HCT116 (cell line): ENCODE measurements at regions of chr10 and their contacts with region 1.

Region 1: DNA sequence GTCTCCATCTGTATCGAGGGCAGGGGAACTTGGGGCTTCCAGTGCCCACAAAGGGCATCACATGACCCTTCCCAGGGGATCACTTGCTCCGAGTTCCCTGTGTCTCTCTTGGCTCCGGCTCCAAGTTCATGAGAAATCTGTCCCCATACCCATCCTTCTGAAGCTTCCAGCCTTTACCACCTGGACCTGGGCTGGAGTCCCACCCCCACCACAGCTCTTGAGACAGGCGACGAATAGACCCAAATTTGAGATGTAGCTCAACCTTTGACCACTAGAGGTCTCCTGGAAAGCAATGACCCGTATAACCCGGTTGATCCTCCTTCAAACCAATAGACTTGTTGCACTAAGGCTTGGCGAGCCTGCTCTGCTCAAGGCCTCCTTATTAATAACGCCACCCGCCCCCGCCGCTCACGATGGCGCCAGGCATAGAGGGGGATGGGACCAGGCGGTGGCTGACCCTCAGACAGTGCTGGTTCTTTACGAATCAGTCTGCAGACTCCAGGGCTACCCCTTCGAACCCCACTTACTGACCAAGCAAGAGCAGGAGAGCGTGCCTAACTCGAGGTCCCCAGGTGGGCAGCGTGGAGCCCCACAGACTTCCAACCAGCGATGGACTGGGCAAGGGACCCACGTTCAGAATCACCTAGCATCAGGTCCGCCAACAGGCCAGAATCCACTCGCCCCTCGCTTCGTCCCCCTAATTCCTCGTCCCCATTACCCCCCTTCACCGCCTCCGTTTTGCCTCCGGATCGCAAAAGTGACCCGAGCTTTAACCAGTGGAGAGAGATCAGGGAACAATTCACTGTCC is 4.4 kb upstream of the ARID5B start:
- DNase-seq: peak; percentile 80
- ATAC-seq: peak; percentile 79
- H3K4me3 ChIP-seq: peak overlapping the region in 1 of 2 experiments; percentile 18; a peak in 1 of 4 replicates
- H3K27ac ChIP-seq: peak overlapping the region; percentile 43; the same call in 1 of the 2 replicates
- H3K4me1 ChIP-seq: peaks cover 15 to 31% of the 10 kb centered on the region in 2 experiments
- H3K27me3 ChIP-seq: no peaks in the 10 kb centered on the region
- CTCF ChIP-seq: peak; percentile 50 to 70 (median 69); a peak in 5 of 6 replicates
- POLR2A ChIP-seq: no peak
- RAD21 ChIP-seq: peak; percentile 53

Region 2: DNA sequence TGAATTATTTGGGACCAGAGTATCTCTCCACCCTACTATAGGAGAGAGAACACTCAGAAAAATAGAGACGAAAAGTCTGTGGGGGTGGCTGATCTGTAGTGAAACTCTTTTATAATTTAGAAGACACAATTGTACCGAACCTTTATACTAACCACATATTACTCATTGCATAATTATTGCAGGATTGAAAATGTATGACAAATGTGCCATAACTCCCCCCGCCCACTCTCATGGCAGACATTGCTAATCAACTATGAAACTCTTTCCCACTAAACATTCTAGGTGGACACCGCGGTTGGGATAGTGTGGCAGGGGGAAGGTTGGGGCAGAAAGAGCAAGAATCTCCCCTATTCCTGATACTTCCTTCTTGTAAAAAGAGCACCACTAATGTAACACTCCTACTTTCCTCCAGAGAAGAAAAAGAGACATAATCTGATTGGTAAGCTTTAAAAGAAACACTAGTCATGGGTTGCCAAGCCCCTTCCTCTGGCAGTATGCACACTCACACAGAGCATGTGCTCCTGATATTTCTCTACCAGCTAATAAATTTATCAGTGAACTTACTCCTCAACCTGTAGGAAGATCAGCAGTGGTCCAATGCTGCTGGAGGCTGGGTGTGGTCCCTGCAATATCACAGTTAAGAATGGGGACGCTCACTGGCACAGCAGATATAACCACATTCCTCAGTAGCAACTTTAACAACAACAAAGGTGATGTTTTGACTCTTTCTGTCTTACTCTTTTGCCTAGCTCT is 14.3 kb before region 1 on chr10:
- CTCF ChIA-PET with region 1: interaction called, 12 read pairs
- POLR2A ChIA-PET with region 1: no interaction called
- RAD21 ChIA-PET with region 1: no interaction called
- intact Hi-C with region 1: no loop called
- DNase-seq: no peak
- ATAC-seq: no peak
- H3K4me3 ChIP-seq: no peak overlapping the region
- H3K27ac ChIP-seq: no peak overlapping the region
- H3K4me1 ChIP-seq: peaks cover 0 to 9% of the 10 kb centered on the region in 2 experiments; a peak in 2 of 4 replicates
- H3K27me3 ChIP-seq: no peaks in the 10 kb centered on the region
- CTCF ChIP-seq: no peak
- POLR2A ChIP-seq: no peak
- RAD21 ChIP-seq: no peak